ENCODE measurements at regions of chr7 and their contacts with region 1.

Region 1: DNA sequence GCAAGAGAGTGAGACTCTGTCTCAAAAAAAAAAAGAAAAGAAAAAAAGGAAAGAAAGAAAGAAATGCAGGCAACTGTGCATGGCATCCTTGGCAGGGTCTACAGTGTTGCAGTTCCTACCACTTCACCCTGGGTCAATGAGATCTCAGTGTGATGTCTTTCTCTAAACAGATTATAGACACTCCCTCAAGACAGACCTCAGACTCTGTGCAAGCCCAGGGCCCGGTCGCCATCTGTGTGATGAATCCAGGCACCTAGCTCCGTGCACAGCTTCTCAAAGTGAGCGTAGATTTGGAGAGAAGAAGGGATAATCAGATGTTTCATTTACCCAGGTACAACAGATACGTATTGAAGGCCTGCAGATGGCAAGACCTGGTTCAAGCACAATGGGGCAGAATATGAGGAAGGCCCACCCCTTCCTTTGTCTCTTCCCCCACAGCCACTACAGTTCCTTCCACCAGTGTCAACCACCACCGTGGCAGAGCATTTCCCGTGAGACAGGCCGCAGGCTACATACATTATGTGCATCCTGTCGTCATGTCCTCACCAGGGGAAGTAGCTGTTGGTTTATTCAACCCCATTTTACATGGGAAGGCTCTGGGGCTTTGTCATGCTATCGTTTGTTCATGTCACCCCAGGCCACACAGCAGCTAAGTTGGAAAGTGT is 471.7 kb upstream of the GALNT17 start:
- DNase-seq: peak; percentile 77 to 85
- ATAC-seq: peak; percentile 86 to 95 (median 92)
- H3K4me3 ChIP-seq: no peak overlapping the region
- H3K4me3 Mint-ChIP-seq: peak overlapping the region; percentile 71
- H3K27ac ChIP-seq: peak overlapping the region; percentile 78
- H3K27ac Mint-ChIP-seq: peak overlapping the region; percentile 81 to 89
- H3K4me1 ChIP-seq: peaks cover 38% of the 10 kb centered on the region
- H3K4me1 Mint-ChIP-seq: peaks cover 37 to 47% of the 10 kb centered on the region in 2 donors
- H3K27me3 ChIP-seq: no peaks in the 10 kb centered on the region
- H3K27me3 Mint-ChIP-seq: no peaks in the 10 kb centered on the region
- CTCF ChIP-seq: no peak

Region 2: DNA sequence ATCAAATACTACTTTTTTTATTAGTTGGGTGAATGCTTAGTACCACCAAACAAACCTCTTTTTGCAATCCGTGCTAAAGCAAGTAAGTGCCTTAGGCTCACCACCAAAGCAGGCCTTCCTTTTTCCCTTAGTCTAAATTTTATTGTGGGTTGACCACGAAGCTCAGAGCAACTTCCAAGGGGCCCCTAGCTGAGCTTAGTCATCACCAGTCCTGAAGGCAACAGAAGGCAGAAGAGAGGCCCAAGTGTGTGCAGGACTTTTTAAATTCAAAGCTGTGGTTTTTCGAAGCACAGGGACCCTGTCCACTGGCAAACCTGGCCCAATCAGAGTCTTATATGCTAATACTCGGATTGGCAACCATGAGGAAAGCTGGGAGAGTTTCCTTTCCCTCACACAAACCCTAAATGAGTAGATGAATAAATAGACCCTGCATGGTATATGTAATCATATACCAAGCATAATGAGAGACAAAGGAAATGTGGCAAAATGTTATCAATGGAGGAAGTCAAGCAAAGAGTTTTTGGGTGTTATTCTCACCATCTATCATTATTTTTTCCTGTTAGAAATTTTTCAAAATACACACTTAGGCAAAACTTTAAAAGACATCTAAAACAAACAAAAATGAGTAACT is 18.4 kb after region 1 on chr7:
- intact Hi-C with region 1: loop called (anchors 2 kb)
- DNase-seq: peak in 1 of 2 donors; percentile 26
- ATAC-seq: peak in 1 of 3 donors; percentile 15
- H3K4me3 ChIP-seq: no peak overlapping the region
- H3K4me3 Mint-ChIP-seq: peak overlapping the region; percentile 85
- H3K27ac ChIP-seq: peak overlapping the region; percentile 79
- H3K27ac Mint-ChIP-seq: peak overlapping the region; percentile 89 to 95
- H3K4me1 ChIP-seq: peaks cover 47% of the 10 kb centered on the region
- H3K4me1 Mint-ChIP-seq: peaks cover 70 to 84% of the 10 kb centered on the region in 2 donors
- H3K27me3 ChIP-seq: no peaks in the 10 kb centered on the region
- H3K27me3 Mint-ChIP-seq: no peaks in the 10 kb centered on the region
- CTCF ChIP-seq: no peak